Activated B cell treated with CpG ODN at 0.5 μM for 24 hours (primary cell): ENCODE measurements at regions of chr12 and their contacts with region 1.

Region 1: GRCh38 chr12:68358532-68359485 is 26.6 kb upstream of the MDM1 start:
- DNase-seq: no peak
- ATAC-seq: peak; percentile 81
- H3K4me3 Mint-ChIP-seq: peak overlapping the region; percentile 62
- H3K27ac Mint-ChIP-seq: peak overlapping the region; percentile 92
- H3K4me1 Mint-ChIP-seq: peaks cover 28% of the 10 kb centered on the region
- H3K27me3 Mint-ChIP-seq: no peaks in the 10 kb centered on the region
- CTCF ChIP-seq: no peak

Region 2: GRCh38 chr12:68267892-68268396 is 90.9 kb before region 1 on chr12:
- CTCF ChIA-PET with region 1: no interaction called
- POLR2A ChIA-PET with region 1: no interaction called
- intact Hi-C with region 1: no loop called
- DNase-seq: no peak
- ATAC-seq: no peak
- H3K4me3 Mint-ChIP-seq: no peak overlapping the region
- H3K27ac Mint-ChIP-seq: no peak overlapping the region
- H3K4me1 Mint-ChIP-seq: no peaks in the 10 kb centered on the region
- H3K27me3 Mint-ChIP-seq: peaks cover 5% of the 10 kb centered on the region
- CTCF ChIP-seq: no peak

Region 3: DNA sequence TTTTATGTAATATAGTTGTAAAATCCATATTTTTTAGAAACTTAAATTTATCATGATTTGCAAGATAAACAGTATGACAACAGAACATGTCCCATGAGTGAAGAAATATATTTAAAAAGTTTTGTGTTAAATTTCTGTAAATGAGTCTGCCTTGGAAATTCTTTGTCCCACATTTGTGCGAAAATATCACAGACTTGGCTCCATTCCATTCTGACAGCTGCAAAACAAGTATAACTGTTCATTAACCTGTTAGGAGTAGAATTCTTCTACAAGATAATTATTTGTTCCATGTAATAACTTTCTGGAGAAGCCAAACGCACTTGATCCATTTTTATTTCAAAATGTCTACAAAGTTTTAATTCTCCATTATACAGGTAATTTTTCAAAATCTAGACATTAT is 64.6 kb before region 1 on chr12:
- CTCF ChIA-PET with region 1: no interaction called
- POLR2A ChIA-PET with region 1: no interaction called
- intact Hi-C with region 1: no loop called
- DNase-seq: no peak
- ATAC-seq: no peak
- H3K4me3 Mint-ChIP-seq: no peak overlapping the region
- H3K27ac Mint-ChIP-seq: no peak overlapping the region
- H3K4me1 Mint-ChIP-seq: peaks cover 3% of the 10 kb centered on the region
- H3K27me3 Mint-ChIP-seq: no peaks in the 10 kb centered on the region
- CTCF ChIP-seq: no peak

Region 4: DNA sequence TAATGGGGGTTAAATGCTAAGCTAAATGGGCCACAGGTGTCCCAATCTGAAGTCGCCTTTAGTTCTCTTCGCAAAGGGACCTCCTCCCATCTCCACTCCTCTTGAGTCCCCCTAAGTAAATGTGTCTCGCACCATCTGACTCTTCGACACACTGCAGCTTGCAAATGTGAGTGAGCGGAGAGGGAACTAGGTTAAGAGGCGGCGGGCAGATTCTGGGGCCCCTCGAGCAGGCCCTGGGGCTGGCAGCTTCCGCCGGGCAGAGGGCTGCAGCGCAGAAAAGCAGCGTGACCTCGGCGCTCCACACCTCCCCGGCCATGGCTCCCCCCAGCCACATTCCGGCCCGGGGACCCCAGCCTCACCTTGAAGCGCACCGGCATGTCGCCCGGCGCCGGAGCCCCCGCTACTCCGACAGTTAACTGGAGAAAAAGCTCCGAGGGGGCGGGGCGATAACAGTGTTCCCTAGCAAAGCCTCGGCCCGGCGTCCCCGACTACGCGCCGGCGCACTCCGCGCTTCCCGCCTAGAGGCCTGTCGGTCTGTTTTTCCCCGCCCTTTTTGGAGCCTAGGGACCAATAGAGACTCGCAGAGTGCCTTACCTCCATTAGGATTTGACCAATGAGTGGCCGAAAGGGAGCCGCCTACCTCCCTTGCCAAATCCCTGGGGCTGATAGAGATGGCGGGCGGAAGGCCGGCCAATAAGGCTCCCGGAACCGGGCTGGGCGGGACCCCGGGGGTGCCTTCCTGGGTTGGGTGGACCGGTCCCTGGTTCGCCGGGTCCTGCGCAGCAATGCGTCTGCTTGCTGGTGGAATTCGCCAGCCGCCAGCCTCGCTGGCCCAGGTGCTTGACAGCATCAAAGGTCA is 26.7 kb before region 1 on chr12 and contains the start of gene MDM1:
- CTCF ChIA-PET with region 1: interaction called, 3 read pairs
- POLR2A ChIA-PET with region 1: interaction called, 8 read pairs
- intact Hi-C with region 1: loop called (anchors 1 kb)
- DNase-seq: peak; percentile 92
- ATAC-seq: peak; percentile 97
- H3K4me3 Mint-ChIP-seq: peak within 1 kb of the TSS; percentile 89
- H3K27ac Mint-ChIP-seq: peak within 1 kb of the TSS; percentile 87
- H3K4me1 Mint-ChIP-seq: peaks cover 27% of the 10 kb centered on the region
- H3K27me3 Mint-ChIP-seq: no peaks in the 10 kb centered on the region
- CTCF ChIP-seq: no peak
- total RNA-seq, gene MDM1: 24.5 and 25.9 TPM in 2 replicates

Region 5: GRCh38 chr12:68374307-68374982 is 15.6 kb after region 1 on chr12:
- CTCF ChIA-PET with region 1: interaction called, 3 read pairs
- POLR2A ChIA-PET with region 1: interaction called, 11 read pairs
- intact Hi-C with region 1: loop called (anchors 1 kb)
- DNase-seq: no peak
- ATAC-seq: peak; percentile 78
- H3K4me3 Mint-ChIP-seq: peak overlapping the region; percentile 32
- H3K27ac Mint-ChIP-seq: peak overlapping the region; percentile 77
- H3K4me1 Mint-ChIP-seq: peaks cover 33% of the 10 kb centered on the region
- H3K27me3 Mint-ChIP-seq: no peaks in the 10 kb centered on the region
- CTCF ChIP-seq: no peak

Region 6: DNA sequence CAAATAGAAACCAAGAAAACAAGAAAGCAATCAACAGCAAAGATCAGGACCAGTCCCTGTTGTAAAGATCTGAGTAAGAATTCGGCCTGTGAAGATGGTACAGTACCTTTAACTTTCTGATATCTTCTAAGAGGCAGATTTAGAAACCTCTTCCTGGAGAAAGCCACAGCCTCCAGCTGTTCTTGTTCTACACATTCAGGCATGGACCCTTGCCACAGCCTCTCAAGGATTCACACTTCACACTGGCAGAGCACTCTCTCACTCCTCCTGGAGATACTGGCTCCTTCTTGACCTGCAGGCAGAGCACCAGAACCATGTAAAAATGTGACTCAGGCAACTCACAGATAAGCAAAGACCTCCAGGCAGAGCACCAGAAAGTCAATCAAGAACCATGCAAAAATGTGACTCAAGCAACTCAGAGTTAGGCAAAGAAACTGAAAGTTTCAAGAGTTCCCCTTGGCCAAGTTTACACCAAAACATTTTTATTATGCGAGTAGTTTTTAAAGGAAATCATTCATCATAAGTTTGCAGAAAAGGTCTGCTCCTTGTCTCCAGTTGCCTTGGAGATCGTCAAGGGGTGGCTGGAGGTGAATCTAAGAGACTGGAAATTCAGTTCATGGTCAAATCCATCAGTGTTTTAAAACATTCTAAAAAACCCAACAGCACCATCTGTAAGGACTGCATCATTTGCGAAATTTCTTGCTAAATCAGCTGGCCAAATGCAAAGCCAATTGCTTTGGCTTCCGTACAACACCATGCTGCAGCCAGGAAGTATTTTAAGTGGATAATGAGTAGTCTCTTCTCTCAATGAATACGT is 92.7 kb after region 1 on chr12:
- CTCF ChIA-PET with region 1: no interaction called
- POLR2A ChIA-PET with region 1: interaction called, 6 read pairs
- intact Hi-C with region 1: loop called (anchors 2 kb)
- DNase-seq: peak; percentile 22
- ATAC-seq: peak; percentile 78
- H3K4me3 Mint-ChIP-seq: peak overlapping the region; percentile 76
- H3K27ac Mint-ChIP-seq: peak overlapping the region; percentile 85
- H3K4me1 Mint-ChIP-seq: peaks cover 94% of the 10 kb centered on the region
- H3K27me3 Mint-ChIP-seq: no peaks in the 10 kb centered on the region
- CTCF ChIP-seq: no peak

Region 7: DNA sequence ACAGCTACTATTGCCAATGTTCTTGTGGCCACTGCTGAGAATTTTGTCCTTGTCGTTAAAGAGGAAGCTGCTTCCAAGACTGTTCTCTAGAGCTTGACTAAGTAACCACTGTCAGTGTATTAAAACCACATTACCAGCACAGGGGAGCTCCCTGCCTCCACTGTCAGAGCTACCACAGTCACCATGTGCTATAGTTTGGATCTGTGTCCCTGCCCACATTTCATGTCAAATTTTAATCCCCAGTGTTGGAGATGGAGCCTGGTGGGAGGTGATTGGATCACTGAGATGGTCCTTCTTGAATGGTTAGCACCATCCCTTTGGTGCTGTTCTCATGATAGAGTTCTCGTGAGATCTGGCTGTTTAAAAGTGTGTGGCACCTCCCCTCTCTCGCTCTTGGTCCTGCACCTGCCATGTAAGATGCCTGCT is 228.7 kb after region 1 on chr12:
- CTCF ChIA-PET with region 1: interaction called, 3 read pairs
- POLR2A ChIA-PET with region 1: no interaction called
- intact Hi-C with region 1: loop called (anchors 2 kb)
- DNase-seq: no peak
- ATAC-seq: peak; percentile 90
- H3K4me3 Mint-ChIP-seq: no peak overlapping the region
- H3K27ac Mint-ChIP-seq: peak overlapping the region; percentile 14
- H3K4me1 Mint-ChIP-seq: peaks cover 37% of the 10 kb centered on the region
- H3K27me3 Mint-ChIP-seq: no peaks in the 10 kb centered on the region
- CTCF ChIP-seq: no peak

Region 8: GRCh38 chr12:68641138-68641537 is 282.3 kb after region 1 on chr12:
- CTCF ChIA-PET with region 1: no interaction called
- POLR2A ChIA-PET with region 1: no interaction called
- intact Hi-C with region 1: loop called (anchors 2 kb)
- DNase-seq: no peak
- ATAC-seq: peak; percentile 80
- H3K4me3 Mint-ChIP-seq: peak overlapping the region; percentile 57
- H3K27ac Mint-ChIP-seq: peak overlapping the region; percentile 72
- H3K4me1 Mint-ChIP-seq: peaks cover 77% of the 10 kb centered on the region
- H3K27me3 Mint-ChIP-seq: no peaks in the 10 kb centered on the region
- CTCF ChIP-seq: no peak

Region 9: GRCh38 chr12:68686595-68687521 is 328.0 kb after region 1 on chr12 and contains the start of gene NUP107:
- CTCF ChIA-PET with region 1: interaction called, 5 read pairs
- POLR2A ChIA-PET with region 1: interaction called, 3 read pairs
- intact Hi-C with region 1: loop called (anchors 1 kb)
- DNase-seq: peak; percentile 93
- ATAC-seq: peak; percentile 97
- H3K4me3 Mint-ChIP-seq: peak within 1 kb of the TSS; percentile 98
- H3K27ac Mint-ChIP-seq: peak within 1 kb of the TSS; percentile 97
- H3K4me1 Mint-ChIP-seq: peaks cover 33% of the 10 kb centered on the region
- H3K27me3 Mint-ChIP-seq: no peaks in the 10 kb centered on the region
- CTCF ChIP-seq: no peak
- total RNA-seq, gene NUP107: 75.0 and 90.8 TPM in 2 replicates